ENCODE measurements at regions of chr1 and their contacts with region 1.

Region 1: GRCh38 chr1:201170533-201171062 is 16.3 kb upstream of the TMEM9 start:
- DNase-seq: peak; percentile 93
- H3K4me3 Mint-ChIP-seq: peak overlapping the region; percentile 79
- H3K27ac Mint-ChIP-seq: peak overlapping the region; percentile 84
- H3K4me1 Mint-ChIP-seq: peaks cover 22% of the 10 kb centered on the region
- H3K27me3 Mint-ChIP-seq: peaks cover 3% of the 10 kb centered on the region

Region 2: GRCh38 chr1:201042779-201043461 is 127.7 kb before region 1 on chr1:
- CTCF ChIA-PET with region 1: no interaction called
- POLR2A ChIA-PET with region 1: no interaction called
- intact Hi-C with region 1: no loop called
- DNase-seq: peak; percentile 81
- H3K4me3 Mint-ChIP-seq: no peak overlapping the region
- H3K27ac Mint-ChIP-seq: no peak overlapping the region
- H3K4me1 Mint-ChIP-seq: peaks cover 3% of the 10 kb centered on the region
- H3K27me3 Mint-ChIP-seq: no peaks in the 10 kb centered on the region

Region 3: GRCh38 chr1:201053158-201053860 is 117.3 kb before region 1 on chr1:
- CTCF ChIA-PET with region 1: no interaction called
- POLR2A ChIA-PET with region 1: no interaction called
- intact Hi-C with region 1: loop called (anchors 1 kb)
- DNase-seq: no peak
- H3K4me3 Mint-ChIP-seq: no peak overlapping the region
- H3K27ac Mint-ChIP-seq: no peak overlapping the region
- H3K4me1 Mint-ChIP-seq: peaks cover 19% of the 10 kb centered on the region
- H3K27me3 Mint-ChIP-seq: peaks cover 8% of the 10 kb centered on the region

Region 4: DNA sequence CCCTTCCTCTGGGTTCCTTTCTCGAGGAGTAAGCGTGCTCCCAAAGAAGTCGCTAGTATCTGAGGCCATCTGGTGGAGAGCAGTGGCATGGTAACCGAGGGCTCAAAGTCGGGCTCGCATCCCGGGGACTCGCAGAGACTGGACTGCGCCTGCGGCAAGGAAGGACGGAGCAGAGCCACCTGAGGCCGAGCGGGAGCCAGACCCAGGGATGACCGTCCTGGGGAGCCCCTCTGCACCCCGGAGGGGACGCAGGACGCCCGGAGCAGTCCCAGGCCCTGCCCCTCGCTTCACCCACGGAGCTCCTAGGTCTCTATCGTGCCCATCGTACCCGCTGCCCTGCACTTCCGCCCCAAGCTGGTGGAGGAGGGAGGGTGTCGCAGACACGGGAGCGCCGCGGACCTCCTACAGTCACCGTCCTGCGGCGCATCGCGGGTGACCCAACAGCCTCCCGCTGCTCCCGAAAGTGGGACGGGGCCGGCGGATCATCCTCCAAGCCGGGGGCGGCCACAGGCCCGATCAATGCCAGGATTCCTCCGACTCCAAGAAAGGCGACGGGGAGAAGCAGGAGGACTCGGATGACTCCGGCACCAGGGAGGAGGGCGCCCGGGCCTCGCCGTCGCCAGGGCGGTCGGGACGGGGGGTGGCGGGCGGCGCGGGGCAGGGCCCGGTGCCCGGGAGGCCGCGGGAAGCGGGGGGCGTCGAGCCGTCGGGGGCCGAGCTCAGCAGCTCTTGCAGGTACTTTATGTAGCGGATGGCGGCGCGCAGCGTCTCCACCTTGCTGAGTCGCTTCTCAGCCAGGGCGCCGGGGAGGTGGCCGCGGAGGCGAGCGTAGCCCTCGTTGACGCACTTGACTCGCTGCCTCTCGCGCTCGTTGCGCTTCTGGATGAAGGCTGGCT is 56.1 kb before region 1 on chr1:
- CTCF ChIA-PET with region 1: interaction called, 10 read pairs
- POLR2A ChIA-PET with region 1: no interaction called
- intact Hi-C with region 1: no loop called
- DNase-seq: peak; percentile 89
- H3K4me3 Mint-ChIP-seq: peak overlapping the region; percentile 86
- H3K27ac Mint-ChIP-seq: peak overlapping the region; percentile 6
- H3K4me1 Mint-ChIP-seq: no peaks in the 10 kb centered on the region
- H3K27me3 Mint-ChIP-seq: no peaks in the 10 kb centered on the region

Region 5: GRCh38 chr1:201154389-201155165 is 16.0 kb before region 1 on chr1 and contains the start of gene TMEM9:
- CTCF ChIA-PET with region 1: interaction called, 10 read pairs
- POLR2A ChIA-PET with region 1: interaction called, 17 read pairs
- intact Hi-C with region 1: loop called (anchors 1 kb)
- DNase-seq: peak; percentile 98
- H3K4me3 Mint-ChIP-seq: peak within 1 kb of the TSS; percentile 80
- H3K27ac Mint-ChIP-seq: peak within 1 kb of the TSS; percentile 71
- H3K4me1 Mint-ChIP-seq: peaks cover 20% of the 10 kb centered on the region
- H3K27me3 Mint-ChIP-seq: peaks cover 13% of the 10 kb centered on the region
- total RNA-seq, gene TMEM9: 21.7 to 22.5 TPM

Region 6: DNA sequence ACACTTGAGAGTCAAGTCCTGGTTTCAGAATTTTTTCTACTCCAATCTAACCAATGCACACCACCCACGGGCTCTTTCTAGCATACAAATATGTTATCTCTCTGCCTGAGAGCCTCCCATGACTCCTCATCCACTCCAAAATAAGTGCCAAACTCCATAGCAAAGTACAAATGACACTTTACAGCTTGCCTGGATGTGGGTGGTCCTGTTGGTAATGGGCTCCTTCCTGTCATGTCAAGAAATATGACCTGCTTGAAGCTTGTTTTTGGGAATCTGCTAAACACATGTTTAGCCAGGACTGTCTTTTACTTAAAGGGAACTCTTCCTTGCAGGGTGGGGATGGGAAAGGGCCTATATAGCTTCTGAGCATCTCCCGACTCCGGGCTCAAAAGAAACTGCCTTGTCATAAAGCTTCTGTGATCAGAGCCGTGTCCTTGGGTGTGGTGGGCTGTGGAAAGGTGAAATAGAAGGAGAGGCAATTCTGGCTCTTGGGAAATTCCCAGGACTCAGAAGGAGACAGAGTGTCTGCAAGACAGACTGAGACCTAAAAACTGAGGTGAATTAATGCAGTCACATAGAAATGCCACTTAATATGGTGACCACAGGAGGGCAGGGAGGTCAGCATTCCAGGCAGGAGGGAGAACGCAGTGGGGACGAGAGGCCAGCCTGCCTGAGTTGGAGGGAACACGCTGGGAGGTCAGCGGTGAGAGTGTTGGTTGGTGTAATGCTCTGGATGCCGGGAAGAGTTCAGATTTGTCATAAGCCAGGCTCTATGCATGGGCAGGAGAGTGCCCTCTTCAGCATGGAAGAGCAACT is 13.9 kb after region 1 on chr1:
- CTCF ChIA-PET with region 1: interaction called, 6 read pairs
- POLR2A ChIA-PET with region 1: no interaction called
- intact Hi-C with region 1: loop called (anchors 1 kb)
- DNase-seq: no peak
- H3K4me3 Mint-ChIP-seq: no peak overlapping the region
- H3K27ac Mint-ChIP-seq: no peak overlapping the region
- H3K4me1 Mint-ChIP-seq: no peaks in the 10 kb centered on the region
- H3K27me3 Mint-ChIP-seq: peaks cover 31% of the 10 kb centered on the region

Region 7: GRCh38 chr1:201191653-201192260 is 21.2 kb after region 1 on chr1:
- CTCF ChIA-PET with region 1: no interaction called
- POLR2A ChIA-PET with region 1: no interaction called
- intact Hi-C with region 1: loop called (anchors 1 kb)
- DNase-seq: peak; percentile 74
- H3K4me3 Mint-ChIP-seq: no peak overlapping the region
- H3K27ac Mint-ChIP-seq: no peak overlapping the region
- H3K4me1 Mint-ChIP-seq: peaks cover 10% of the 10 kb centered on the region
- H3K27me3 Mint-ChIP-seq: peaks cover 20% of the 10 kb centered on the region

Region 8: DNA sequence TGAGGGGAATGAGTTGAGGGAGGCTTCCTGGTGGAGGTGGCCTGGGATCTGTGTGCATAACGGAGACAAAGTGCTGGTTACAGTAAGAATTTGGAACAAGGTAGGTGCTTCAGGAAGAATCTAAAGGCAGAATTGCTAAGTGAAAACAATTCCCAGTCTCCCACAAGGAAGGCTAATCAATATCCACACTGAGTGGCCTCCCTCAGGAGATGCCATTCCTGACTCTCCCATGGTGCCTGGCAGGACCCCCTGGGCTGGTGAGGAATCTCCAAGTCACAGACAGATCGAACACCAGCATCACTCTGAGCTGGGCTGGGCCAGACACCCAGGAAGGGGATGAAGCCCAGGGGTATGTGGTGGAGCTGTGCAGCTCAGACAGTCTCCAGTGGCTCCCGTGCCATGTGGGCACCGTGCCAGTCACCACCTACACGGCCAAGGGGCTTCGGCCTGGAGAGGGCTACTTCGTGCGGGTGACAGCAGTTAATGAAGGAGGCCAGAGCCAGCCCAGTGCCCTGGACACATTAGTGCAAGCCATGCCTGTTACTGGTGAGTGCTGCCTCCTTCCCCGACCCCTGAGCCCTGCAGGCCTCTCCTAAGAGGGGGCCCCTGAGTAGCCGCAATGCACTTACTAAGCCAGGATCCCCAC is 50.7 kb after region 1 on chr1:
- CTCF ChIA-PET with region 1: interaction called, 6 read pairs
- POLR2A ChIA-PET with region 1: no interaction called
- intact Hi-C with region 1: loop called (anchors 1 kb)
- DNase-seq: peak; percentile 7
- H3K4me3 Mint-ChIP-seq: no peak overlapping the region
- H3K27ac Mint-ChIP-seq: no peak overlapping the region
- H3K4me1 Mint-ChIP-seq: no peaks in the 10 kb centered on the region
- H3K27me3 Mint-ChIP-seq: no peaks in the 10 kb centered on the region